ENCODE measurements at regions of chr1 and their contacts with region 1.

Region 1: GRCh38 chr1:149927503-149928387 is at the start of gene SF3B4:
- DNase-seq: peak; percentile 89 to 96 (median 95)
- ATAC-seq: peak; percentile 98
- H3K4me3 ChIP-seq: peak within 1 kb of the TSS; percentile 82
- H3K4me3 Mint-ChIP-seq: peak within 1 kb of the TSS; percentile 91 to 99 (median 96)
- H3K27ac ChIP-seq: peak within 1 kb of the TSS; percentile 94
- H3K27ac Mint-ChIP-seq: peak within 1 kb of the TSS; percentile 96 to 99 (median 98)
- H3K4me1 ChIP-seq: peaks cover 19 to 30% of the 10 kb centered on the region in 2 donors
- H3K4me1 Mint-ChIP-seq: peaks cover 44 to 67% (median 49%) of the 10 kb centered on the region in 7 donors
- H3K27me3 ChIP-seq: no peaks in the 10 kb centered on the region
- H3K27me3 Mint-ChIP-seq: peaks cover 0 to 13% (median 5%) of the 10 kb centered on the region in 5 donors
- total RNA-seq, gene SF3B4: 39.0 to 103 (median 43.4) TPM

Region 2: GRCh38 chr1:149844101-149844500 is 83.6 kb before region 1 on chr1:
- CTCF ChIA-PET with region 1: no interaction called
- POLR2A ChIA-PET with region 1: interaction called, 12 read pairs
- intact Hi-C with region 1: no loop called
- DNase-seq: peak in 5 of 9 donors; percentile 0 to 35 (median 5)
- ATAC-seq: no peak
- H3K4me3 ChIP-seq: peak overlapping the region; percentile 92
- H3K4me3 Mint-ChIP-seq: peak overlapping the region; percentile 78 to 97 (median 90)
- H3K27ac ChIP-seq: peak overlapping the region; percentile 78
- H3K27ac Mint-ChIP-seq: peak overlapping the region; percentile 75 to 95 (median 89)
- H3K4me1 ChIP-seq: peaks cover 29 to 42% of the 10 kb centered on the region in 2 donors
- H3K4me1 Mint-ChIP-seq: peaks cover 31 to 54% (median 49%) of the 10 kb centered on the region in 7 donors
- H3K27me3 ChIP-seq: no peaks in the 10 kb centered on the region
- H3K27me3 Mint-ChIP-seq: no peaks in the 10 kb centered on the region

Region 3: GRCh38 chr1:149917571-149918144 is 10.1 kb before region 1 on chr1 and contains the start of gene SV2A:
- CTCF ChIA-PET with region 1: interaction called, 3 read pairs
- POLR2A ChIA-PET with region 1: interaction called, 8 read pairs
- intact Hi-C with region 1: loop called in 1 of 2 experiments (anchors 1 kb)
- DNase-seq: peak in 8 of 9 donors; percentile 5 to 57 (median 20)
- ATAC-seq: peak; percentile 80
- H3K4me3 ChIP-seq: peak within 1 kb of the TSS; percentile 81
- H3K4me3 Mint-ChIP-seq: peak within 1 kb of the TSS; percentile 68 to 97 (median 88)
- H3K27ac ChIP-seq: peak within 1 kb of the TSS; percentile 36
- H3K27ac Mint-ChIP-seq: peak within 1 kb of the TSS in 8 of 9 donors; percentile 26 to 91 (median 70)
- H3K4me1 ChIP-seq: peaks cover 7 to 33% of the 10 kb centered on the region in 2 donors
- H3K4me1 Mint-ChIP-seq: peaks cover 22 to 57% (median 47%) of the 10 kb centered on the region in 7 donors
- H3K27me3 ChIP-seq: no peaks in the 10 kb centered on the region
- H3K27me3 Mint-ChIP-seq: no peaks in the 10 kb centered on the region
- total RNA-seq, gene SV2A: 2.6 to 18.8 (median 3.1) TPM

Region 4: GRCh38 chr1:150010393-150011115 is 82.8 kb after region 1 on chr1 and contains the start of gene OTUD7B:
- CTCF ChIA-PET with region 1: no interaction called
- POLR2A ChIA-PET with region 1: no interaction called
- intact Hi-C with region 1: loop called (anchors 1 kb)
- DNase-seq: peak; percentile 5 to 85 (median 46)
- ATAC-seq: peak; percentile 92
- H3K4me3 ChIP-seq: peak within 1 kb of the TSS; percentile 89
- H3K4me3 Mint-ChIP-seq: peak within 1 kb of the TSS; percentile 88 to 99 (median 96)
- H3K27ac ChIP-seq: peak within 1 kb of the TSS; percentile 73
- H3K27ac Mint-ChIP-seq: peak within 1 kb of the TSS; percentile 85 to 93 (median 87)
- H3K4me1 ChIP-seq: peaks cover 8 to 12% of the 10 kb centered on the region in 2 donors
- H3K4me1 Mint-ChIP-seq: peaks cover 21 to 38% (median 31%) of the 10 kb centered on the region in 7 donors
- H3K27me3 ChIP-seq: no peaks in the 10 kb centered on the region
- H3K27me3 Mint-ChIP-seq: peaks cover 0 to 12% (median 0%) of the 10 kb centered on the region in 5 donors
- total RNA-seq, gene OTUD7B: 4.6 to 12.8 (median 9.7) TPM

Region 5: DNA sequence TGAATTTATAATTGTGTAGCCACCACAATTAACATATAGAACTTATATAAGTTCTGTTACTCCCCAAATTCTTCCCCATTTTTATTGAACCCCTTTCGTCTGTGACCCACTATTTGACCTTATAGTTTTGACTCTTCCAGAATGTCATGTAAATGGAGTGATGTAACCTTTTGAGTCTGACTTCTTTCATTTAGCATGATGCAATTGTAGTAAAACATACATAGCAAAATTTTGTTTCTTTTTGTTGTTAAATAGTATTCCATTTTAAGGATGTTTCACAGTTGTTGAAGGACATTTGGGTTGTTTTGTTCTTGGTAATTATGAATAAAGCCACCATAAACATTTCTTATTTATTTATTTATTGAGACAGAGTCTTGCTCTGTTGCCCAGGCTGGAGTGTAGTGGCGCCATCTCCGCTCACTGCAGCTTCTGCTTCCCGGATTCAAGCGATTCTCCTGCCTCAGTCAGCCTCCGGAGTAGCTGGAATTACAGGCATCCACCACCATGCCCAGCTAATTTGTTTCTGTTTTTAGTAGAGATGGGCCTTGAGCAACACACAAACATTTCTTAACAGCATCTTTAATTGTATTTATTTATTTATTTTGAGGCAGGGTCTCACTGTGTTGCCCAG is 469.8 kb after region 1 on chr1:
- CTCF ChIA-PET with region 1: no interaction called
- POLR2A ChIA-PET with region 1: no interaction called
- intact Hi-C with region 1: no loop called
- DNase-seq: no peak
- ATAC-seq: no peak
- H3K4me3 ChIP-seq: no peak overlapping the region
- H3K4me3 Mint-ChIP-seq: no peak overlapping the region
- H3K27ac ChIP-seq: no peak overlapping the region
- H3K27ac Mint-ChIP-seq: peak overlapping the region in 1 of 9 donors; percentile 44
- H3K4me1 ChIP-seq: no peaks in the 10 kb centered on the region
- H3K4me1 Mint-ChIP-seq: peaks cover 2 to 57% (median 46%) of the 10 kb centered on the region in 7 donors
- H3K27me3 ChIP-seq: no peaks in the 10 kb centered on the region
- H3K27me3 Mint-ChIP-seq: no peaks in the 10 kb centered on the region